ENCODE measurements at regions of chr16 and their contacts with region 1.

Region 1: DNA sequence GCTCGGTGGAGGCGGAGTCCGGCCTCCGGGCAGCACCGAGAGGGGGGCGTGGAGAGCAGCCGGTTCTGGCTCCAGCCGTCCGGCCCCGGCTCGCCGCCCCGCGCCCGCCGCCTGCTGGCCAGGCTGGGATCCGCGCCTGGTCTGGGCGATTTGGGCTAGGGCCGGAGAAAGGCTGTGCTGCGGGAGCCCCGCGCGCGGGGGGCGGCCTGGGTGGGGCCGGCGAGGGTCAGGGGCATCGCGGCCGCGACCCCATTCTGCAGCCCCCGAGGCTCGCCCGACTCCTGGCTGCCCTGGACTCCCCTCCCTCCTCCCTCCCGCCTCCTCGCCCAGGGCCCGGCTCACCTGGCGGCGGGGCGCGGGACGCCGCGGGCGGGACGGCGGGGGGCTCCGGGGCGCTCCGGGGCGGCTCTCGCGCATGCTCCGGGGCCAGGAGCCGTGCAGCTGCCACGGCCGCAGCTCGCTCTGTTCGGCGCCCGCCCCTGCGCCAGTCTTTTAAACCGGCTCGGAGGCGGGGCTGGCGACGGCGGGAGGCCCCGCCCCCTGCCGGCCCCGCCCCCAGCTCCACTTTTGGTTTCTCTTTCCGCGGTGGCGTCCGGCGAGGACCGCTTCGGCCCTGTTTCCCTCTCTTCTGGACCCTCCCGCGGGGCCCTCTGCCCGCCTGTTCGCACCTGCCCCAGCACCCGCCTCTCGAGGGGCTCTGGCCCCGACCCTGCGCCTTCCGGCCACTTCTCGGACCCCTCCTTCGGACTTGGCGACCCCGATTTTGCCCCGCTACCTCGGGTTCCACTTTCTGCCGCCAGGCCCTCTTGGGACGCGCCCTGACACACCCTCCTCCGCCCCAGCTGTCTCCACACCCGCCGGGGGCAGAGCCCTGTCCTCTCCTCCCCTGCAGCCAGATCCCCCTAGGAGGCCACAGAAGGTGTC is at the start of gene SOCS1:
- DNase-seq: peak; percentile 75 to 94 (median 87)
- ATAC-seq: peak; percentile 64
- H3K4me3 ChIP-seq: peak within 1 kb of the TSS; percentile 90 to 96
- H3K4me3 Mint-ChIP-seq: peak within 1 kb of the TSS; percentile 97
- H3K27ac ChIP-seq: peak within 1 kb of the TSS; percentile 81 to 93
- H3K27ac Mint-ChIP-seq: peak within 1 kb of the TSS; percentile 96
- H3K4me1 ChIP-seq: peaks cover 61% of the 10 kb centered on the region
- H3K4me1 Mint-ChIP-seq: peaks cover 56% of the 10 kb centered on the region
- H3K27me3 ChIP-seq: no peaks in the 10 kb centered on the region
- H3K27me3 Mint-ChIP-seq: no peaks in the 10 kb centered on the region
- CTCF ChIP-seq: peak; percentile 77
- total RNA-seq, gene SOCS1: 74.5 to 75.6 TPM

Region 2: GRCh38 chr16:10743610-10744393 is 512.2 kb before region 1 on chr16 and contains the start of gene NUBP1:
- CTCF ChIA-PET with region 1: no interaction called
- POLR2A ChIA-PET with region 1: interaction called, 3 read pairs
- intact Hi-C with region 1: loop called (anchors 5 to 10 kb)
- DNase-seq: peak; percentile 98 to 100 (median 99)
- ATAC-seq: peak; percentile 95
- H3K4me3 ChIP-seq: peak within 1 kb of the TSS; percentile 84 to 91
- H3K4me3 Mint-ChIP-seq: peak within 1 kb of the TSS; percentile 97
- H3K27ac ChIP-seq: peak within 1 kb of the TSS; percentile 85 to 99
- H3K27ac Mint-ChIP-seq: peak within 1 kb of the TSS; percentile 99
- H3K4me1 ChIP-seq: peaks cover 19% of the 10 kb centered on the region
- H3K4me1 Mint-ChIP-seq: peaks cover 38% of the 10 kb centered on the region
- H3K27me3 ChIP-seq: no peaks in the 10 kb centered on the region
- H3K27me3 Mint-ChIP-seq: no peaks in the 10 kb centered on the region
- CTCF ChIP-seq: no peak
- total RNA-seq, gene NUBP1: 22.8 to 25.1 TPM

Region 3: GRCh38 chr16:10971560-10971961 is 284.4 kb before region 1 on chr16:
- CTCF ChIA-PET with region 1: interaction called, 37 read pairs
- POLR2A ChIA-PET with region 1: interaction called, 15 read pairs
- intact Hi-C with region 1: loop called in 1 of 2 experiments (anchors 1 kb)
- DNase-seq: peak in 3 of 9 experiments; percentile 38 to 75 (median 68)
- ATAC-seq: peak; percentile 48
- H3K4me3 ChIP-seq: no peak overlapping the region
- H3K4me3 Mint-ChIP-seq: no peak overlapping the region
- H3K27ac ChIP-seq: no peak overlapping the region
- H3K27ac Mint-ChIP-seq: no peak overlapping the region
- H3K4me1 ChIP-seq: peaks cover 10% of the 10 kb centered on the region
- H3K4me1 Mint-ChIP-seq: peaks cover 14% of the 10 kb centered on the region
- H3K27me3 ChIP-seq: no peaks in the 10 kb centered on the region
- H3K27me3 Mint-ChIP-seq: no peaks in the 10 kb centered on the region
- CTCF ChIP-seq: peak; percentile 80

Region 4: GRCh38 chr16:11218604-11218962 is 37.4 kb before region 1 on chr16:
- CTCF ChIA-PET with region 1: interaction called, 5 read pairs
- POLR2A ChIA-PET with region 1: interaction called, 64 read pairs
- intact Hi-C with region 1: no loop called
- DNase-seq: peak in 2 of 9 experiments; percentile 19 to 39
- ATAC-seq: no peak
- H3K4me3 ChIP-seq: no peak overlapping the region
- H3K4me3 Mint-ChIP-seq: no peak overlapping the region
- H3K27ac ChIP-seq: no peak overlapping the region
- H3K27ac Mint-ChIP-seq: no peak overlapping the region
- H3K4me1 ChIP-seq: peaks cover 10% of the 10 kb centered on the region
- H3K4me1 Mint-ChIP-seq: peaks cover 12% of the 10 kb centered on the region
- H3K27me3 ChIP-seq: no peaks in the 10 kb centered on the region
- H3K27me3 Mint-ChIP-seq: no peaks in the 10 kb centered on the region
- CTCF ChIP-seq: peak; percentile 47

Region 5: DNA sequence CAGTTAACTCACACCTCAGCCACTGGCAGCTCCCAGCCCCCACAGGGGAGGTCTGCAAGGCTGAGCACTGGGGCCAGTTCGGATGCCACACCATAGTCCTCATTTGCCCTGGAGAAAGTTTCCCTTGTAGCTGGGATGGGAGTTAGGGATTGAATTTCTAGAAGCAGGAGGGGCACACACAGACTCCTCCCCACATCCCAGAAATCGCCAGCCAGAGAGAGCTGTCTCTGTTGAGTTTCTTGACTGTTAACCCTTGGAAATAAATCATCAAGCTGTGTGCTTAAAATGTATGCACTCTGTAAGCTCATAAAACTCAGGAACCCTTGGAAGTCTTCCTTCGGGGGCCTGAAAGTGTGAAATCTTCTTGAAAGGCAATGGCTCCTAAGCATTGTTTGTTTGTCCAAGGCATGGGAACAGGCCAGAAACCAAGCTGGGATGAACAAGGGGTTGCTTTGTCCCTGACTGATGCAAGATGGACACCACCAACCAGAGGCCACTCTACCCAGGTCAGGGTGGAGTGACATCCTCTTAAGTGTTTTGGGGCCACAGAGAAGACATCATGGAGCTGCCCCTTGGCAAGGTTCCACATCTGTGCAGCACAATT is 17.8 kb after region 1 on chr16:
- CTCF ChIA-PET with region 1: interaction called, 14 read pairs
- POLR2A ChIA-PET with region 1: interaction called, 6 read pairs
- intact Hi-C with region 1: no loop called
- DNase-seq: no peak
- ATAC-seq: no peak
- H3K4me3 ChIP-seq: no peak overlapping the region
- H3K4me3 Mint-ChIP-seq: no peak overlapping the region
- H3K27ac ChIP-seq: no peak overlapping the region
- H3K27ac Mint-ChIP-seq: no peak overlapping the region
- H3K4me1 ChIP-seq: no peaks in the 10 kb centered on the region
- H3K4me1 Mint-ChIP-seq: no peaks in the 10 kb centered on the region
- H3K27me3 ChIP-seq: no peaks in the 10 kb centered on the region
- H3K27me3 Mint-ChIP-seq: no peaks in the 10 kb centered on the region
- CTCF ChIP-seq: no peak

Region 6: GRCh38 chr16:11345040-11345862 is 89.3 kb after region 1 on chr16 and contains the start of gene RMI2:
- CTCF ChIA-PET with region 1: interaction called, 4 read pairs
- POLR2A ChIA-PET with region 1: interaction called, 3 read pairs
- intact Hi-C with region 1: loop called in 1 of 2 experiments (anchors 1 kb)
- DNase-seq: peak; percentile 90 to 97 (median 95)
- ATAC-seq: peak; percentile 100
- H3K4me3 ChIP-seq: peak within 1 kb of the TSS; percentile 54 to 60
- H3K4me3 Mint-ChIP-seq: peak within 1 kb of the TSS; percentile 84
- H3K27ac ChIP-seq: no peak within 1 kb of the TSS
- H3K27ac Mint-ChIP-seq: peak within 1 kb of the TSS; percentile 83
- H3K4me1 ChIP-seq: no peaks in the 10 kb centered on the region
- H3K4me1 Mint-ChIP-seq: peaks cover 8% of the 10 kb centered on the region
- H3K27me3 ChIP-seq: no peaks in the 10 kb centered on the region
- H3K27me3 Mint-ChIP-seq: no peaks in the 10 kb centered on the region
- CTCF ChIP-seq: no peak
- total RNA-seq, gene RMI2: 0.69 to 0.73 TPM

Region 7: DNA sequence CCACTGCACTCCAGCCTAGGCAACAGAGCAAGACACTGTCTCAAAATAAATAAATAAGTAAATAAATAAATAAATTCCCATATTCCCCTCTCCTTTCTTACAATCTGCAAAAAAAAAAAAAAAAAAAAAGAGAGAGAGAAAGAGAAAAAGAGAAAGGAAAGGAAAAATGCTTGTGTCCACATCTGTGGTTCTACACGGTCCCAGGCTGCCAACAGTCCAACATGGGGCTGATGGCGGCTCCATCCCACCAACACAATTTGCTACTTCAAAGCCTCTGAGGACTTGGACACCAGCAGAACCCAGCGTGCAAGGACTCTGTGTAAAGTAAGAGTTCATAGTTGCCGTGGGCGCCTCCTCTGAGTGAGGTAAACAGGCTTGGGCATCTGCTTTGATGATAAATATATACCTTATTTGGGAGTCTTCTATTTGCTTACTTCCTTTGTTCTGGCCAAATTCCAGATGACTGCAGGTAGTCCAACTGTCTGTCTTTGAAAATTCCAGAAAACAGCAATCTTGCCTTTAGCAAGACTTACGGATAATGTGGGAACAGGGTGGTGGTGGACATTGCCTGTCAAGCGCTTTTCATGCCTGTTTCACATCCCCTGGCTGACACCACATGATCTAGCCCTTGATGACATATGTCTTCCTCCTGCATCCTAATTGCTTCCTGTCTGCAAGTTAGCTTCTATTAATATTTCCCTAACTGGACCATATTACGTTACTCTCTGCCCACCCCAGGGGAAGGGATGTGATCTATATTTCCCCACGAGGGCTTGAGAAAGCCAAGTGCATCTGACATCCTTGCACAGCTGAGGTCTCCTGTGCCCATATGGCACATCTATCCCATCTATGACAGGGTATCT is 320.7 kb after region 1 on chr16:
- CTCF ChIA-PET with region 1: no interaction called
- POLR2A ChIA-PET with region 1: no interaction called
- intact Hi-C with region 1: loop called in 1 of 2 experiments (anchors 10 kb)
- DNase-seq: peak in 1 of 9 experiments; percentile 62
- ATAC-seq: no peak
- H3K4me3 ChIP-seq: no peak overlapping the region
- H3K4me3 Mint-ChIP-seq: peak overlapping the region; percentile 47
- H3K27ac ChIP-seq: peak overlapping the region in 1 of 2 experiments; percentile 42
- H3K27ac Mint-ChIP-seq: peak overlapping the region; percentile 74
- H3K4me1 ChIP-seq: peaks cover 85% of the 10 kb centered on the region
- H3K4me1 Mint-ChIP-seq: peaks cover 80% of the 10 kb centered on the region
- H3K27me3 ChIP-seq: no peaks in the 10 kb centered on the region
- H3K27me3 Mint-ChIP-seq: no peaks in the 10 kb centered on the region
- CTCF ChIP-seq: no peak

Measured in CD8-positive, alpha-beta T cell (primary cell).